ENCODE measurements at regions of chr22 and their contacts with region 1.

Region 1: GRCh38 chr22:42437488-42438292 is 5.5 kb upstream of the NFAM1 start:
- DNase-seq: peak; percentile 71 to 90 (median 81)
- ATAC-seq: peak; percentile 96
- H3K4me3 ChIP-seq: peak overlapping the region; percentile 67
- H3K4me3 Mint-ChIP-seq: peak overlapping the region; percentile 65 to 88 (median 74)
- H3K27ac ChIP-seq: no peak overlapping the region
- H3K27ac Mint-ChIP-seq: peak overlapping the region in 4 of 9 donors; percentile 48 to 87 (median 78)
- H3K4me1 ChIP-seq: peaks cover 0 to 7% of the 10 kb centered on the region in 2 donors
- H3K4me1 Mint-ChIP-seq: peaks cover 0 to 33% (median 12%) of the 10 kb centered on the region in 7 donors
- H3K27me3 ChIP-seq: no peaks in the 10 kb centered on the region
- H3K27me3 Mint-ChIP-seq: peaks cover 0 to 11% (median 0%) of the 10 kb centered on the region in 5 donors

Region 2: GRCh38 chr22:41822317-41823060 is 615.2 kb before region 1 on chr22:
- CTCF ChIA-PET with region 1: no interaction called
- POLR2A ChIA-PET with region 1: no interaction called
- intact Hi-C with region 1: loop called in 1 of 2 experiments (anchors 2 kb)
- DNase-seq: peak in 8 of 9 donors; percentile 30 to 78 (median 70)
- ATAC-seq: peak; percentile 87
- H3K4me3 ChIP-seq: no peak overlapping the region
- H3K4me3 Mint-ChIP-seq: no peak overlapping the region
- H3K27ac ChIP-seq: peak overlapping the region; percentile 4
- H3K27ac Mint-ChIP-seq: peak overlapping the region; percentile 35 to 90 (median 76)
- H3K4me1 ChIP-seq: no peaks in the 10 kb centered on the region
- H3K4me1 Mint-ChIP-seq: peaks cover 5 to 33% (median 15%) of the 10 kb centered on the region in 7 donors
- H3K27me3 ChIP-seq: no peaks in the 10 kb centered on the region
- H3K27me3 Mint-ChIP-seq: no peaks in the 10 kb centered on the region

Region 3: GRCh38 chr22:41966607-41967240 is 471.0 kb before region 1 on chr22:
- CTCF ChIA-PET with region 1: interaction called, 16 read pairs
- POLR2A ChIA-PET with region 1: no interaction called
- intact Hi-C with region 1: loop called (anchors 1 kb)
- DNase-seq: peak in 6 of 9 donors; percentile 20 to 59 (median 48)
- ATAC-seq: peak; percentile 84
- H3K4me3 ChIP-seq: no peak overlapping the region
- H3K4me3 Mint-ChIP-seq: no peak overlapping the region
- H3K27ac ChIP-seq: no peak overlapping the region
- H3K27ac Mint-ChIP-seq: peak overlapping the region in 1 of 9 donors; percentile 72
- H3K4me1 ChIP-seq: no peaks in the 10 kb centered on the region
- H3K4me1 Mint-ChIP-seq: peaks cover 0 to 9% (median 0%) of the 10 kb centered on the region in 7 donors
- H3K27me3 ChIP-seq: no peaks in the 10 kb centered on the region
- H3K27me3 Mint-ChIP-seq: peaks cover 0 to 9% (median 0%) of the 10 kb centered on the region in 5 donors

Region 4: GRCh38 chr22:42269407-42270177 is 168.1 kb before region 1 on chr22:
- CTCF ChIA-PET with region 1: interaction called, 3 read pairs
- POLR2A ChIA-PET with region 1: interaction called, 3 read pairs
- intact Hi-C with region 1: loop called in 1 of 2 experiments (anchors 5 kb)
- DNase-seq: peak; percentile 37 to 74 (median 65)
- ATAC-seq: peak; percentile 64
- H3K4me3 ChIP-seq: peak overlapping the region; percentile 86
- H3K4me3 Mint-ChIP-seq: peak overlapping the region; percentile 86 to 98 (median 92)
- H3K27ac ChIP-seq: peak overlapping the region; percentile 97
- H3K27ac Mint-ChIP-seq: peak overlapping the region; percentile 79 to 95 (median 88)
- H3K4me1 ChIP-seq: peaks cover 28% of the 10 kb centered on the region in 2 donors
- H3K4me1 Mint-ChIP-seq: peaks cover 35 to 56% (median 43%) of the 10 kb centered on the region in 7 donors
- H3K27me3 ChIP-seq: no peaks in the 10 kb centered on the region
- H3K27me3 Mint-ChIP-seq: no peaks in the 10 kb centered on the region

Region 5: DNA sequence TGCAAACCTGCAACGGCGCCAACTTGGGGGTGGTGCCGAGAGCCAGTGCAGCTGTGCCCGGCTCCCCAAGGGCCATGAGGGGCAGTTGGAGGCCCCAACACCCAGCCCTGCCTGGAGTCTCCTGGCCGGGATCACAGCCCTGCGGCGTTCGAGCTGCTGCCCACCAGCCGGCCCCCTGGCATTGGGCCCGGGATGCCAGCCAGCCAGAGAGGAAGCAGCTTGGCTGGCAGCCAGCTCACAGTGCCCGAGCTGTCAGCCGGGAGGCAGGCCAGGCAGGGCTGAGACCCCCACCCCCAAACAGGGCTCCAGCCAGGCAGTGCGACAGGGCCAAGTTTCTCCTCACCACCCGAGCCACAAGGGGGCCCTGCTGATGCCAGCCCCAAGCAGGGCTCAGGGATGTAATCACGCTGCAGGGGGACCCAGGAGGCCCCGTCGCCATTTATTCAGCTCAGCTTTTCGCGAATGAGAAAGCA is 141.3 kb before region 1 on chr22:
- CTCF ChIA-PET with region 1: no interaction called
- POLR2A ChIA-PET with region 1: interaction called, 3 read pairs
- intact Hi-C with region 1: loop called in 1 of 2 experiments (anchors 5 kb)
- DNase-seq: peak in 4 of 9 donors; percentile 37 to 51 (median 44)
- ATAC-seq: no peak
- H3K4me3 ChIP-seq: no peak overlapping the region
- H3K4me3 Mint-ChIP-seq: peak overlapping the region in 5 of 10 donors; percentile 2 to 63 (median 29)
- H3K27ac ChIP-seq: peak overlapping the region; percentile 39
- H3K27ac Mint-ChIP-seq: peak overlapping the region in 8 of 9 donors; percentile 36 to 95 (median 90)
- H3K4me1 ChIP-seq: peaks cover 23 to 69% of the 10 kb centered on the region in 2 donors
- H3K4me1 Mint-ChIP-seq: peaks cover 50 to 94% (median 79%) of the 10 kb centered on the region in 7 donors
- H3K27me3 ChIP-seq: no peaks in the 10 kb centered on the region
- H3K27me3 Mint-ChIP-seq: no peaks in the 10 kb centered on the region

Region 6: DNA sequence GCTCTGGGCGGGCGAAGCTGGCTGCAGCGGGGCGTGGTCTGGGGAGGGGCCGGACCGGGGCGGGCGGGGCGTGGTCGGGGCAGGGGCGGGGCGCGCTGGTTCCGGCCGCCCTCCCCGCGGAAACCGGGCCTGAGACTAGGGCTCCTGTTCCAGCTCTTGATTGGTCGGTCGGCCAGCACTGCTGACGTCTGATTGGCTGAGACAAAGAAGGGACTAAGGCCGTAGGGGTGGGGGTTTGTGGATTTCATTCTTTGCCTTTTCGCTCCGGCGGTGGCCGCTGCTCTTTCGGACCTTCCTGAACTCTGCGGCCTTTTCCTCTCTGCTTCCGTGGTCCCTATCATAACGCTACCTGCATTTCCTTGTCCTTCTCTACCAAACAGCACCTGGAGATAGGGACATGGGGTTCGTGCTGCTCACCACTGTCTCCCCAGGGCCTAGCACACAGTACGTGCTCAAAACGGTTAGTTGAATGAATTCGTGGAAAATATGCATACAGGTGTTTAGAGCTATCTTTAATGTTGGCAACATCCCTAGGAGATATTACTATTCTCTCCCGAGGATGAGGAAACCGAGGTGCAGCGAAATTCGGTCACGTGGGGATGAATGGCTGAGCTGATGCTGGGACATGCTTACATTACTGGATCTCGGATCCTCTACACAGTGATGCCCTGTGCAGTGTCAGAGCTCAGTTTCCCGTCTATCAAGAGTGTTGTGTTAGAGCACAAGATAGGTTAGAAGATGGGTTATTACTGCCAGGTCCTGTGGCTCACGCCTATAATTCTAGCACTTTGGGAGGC is 68.2 kb before region 1 on chr22:
- CTCF ChIA-PET with region 1: interaction called, 3 read pairs
- POLR2A ChIA-PET with region 1: no interaction called
- intact Hi-C with region 1: loop called (anchors 2 to 5 kb)
- DNase-seq: peak; percentile 67 to 84 (median 79)
- ATAC-seq: peak; percentile 99
- H3K4me3 ChIP-seq: peak overlapping the region; percentile 66
- H3K4me3 Mint-ChIP-seq: peak overlapping the region; percentile 87 to 99 (median 93)
- H3K27ac ChIP-seq: peak overlapping the region; percentile 30
- H3K27ac Mint-ChIP-seq: peak overlapping the region; percentile 2 to 88 (median 77)
- H3K4me1 ChIP-seq: peaks cover 4 to 11% of the 10 kb centered on the region in 2 donors
- H3K4me1 Mint-ChIP-seq: peaks cover 9 to 19% (median 14%) of the 10 kb centered on the region in 7 donors
- H3K27me3 ChIP-seq: peaks cover 0 to 18% of the 10 kb centered on the region in 2 donors
- H3K27me3 Mint-ChIP-seq: peaks cover 19 to 49% (median 25%) of the 10 kb centered on the region in 5 donors

Region 7: DNA sequence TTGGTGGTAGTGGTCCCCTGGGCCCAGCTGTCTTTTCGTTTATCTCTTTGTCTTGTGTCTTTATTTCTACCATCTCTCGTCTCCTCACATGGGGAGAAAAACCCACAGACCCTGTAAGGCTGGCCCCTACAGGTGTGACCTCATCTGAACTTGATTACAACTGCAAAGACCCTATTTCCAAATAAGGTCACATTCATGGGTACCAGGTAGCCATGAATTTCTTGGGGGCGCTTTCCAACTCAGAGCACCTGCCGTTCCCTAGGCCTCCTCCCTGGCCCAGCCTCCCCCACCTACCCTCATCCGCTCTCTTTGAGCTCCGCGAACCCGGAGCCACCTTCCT is 95.9 kb after region 1 on chr22:
- CTCF ChIA-PET with region 1: no interaction called
- POLR2A ChIA-PET with region 1: no interaction called
- intact Hi-C with region 1: no loop called
- DNase-seq: no peak
- ATAC-seq: no peak
- H3K4me3 ChIP-seq: peak overlapping the region; percentile 60
- H3K4me3 Mint-ChIP-seq: peak overlapping the region; percentile 72 to 92 (median 83)
- H3K27ac ChIP-seq: peak overlapping the region; percentile 39
- H3K27ac Mint-ChIP-seq: peak overlapping the region in 8 of 9 donors; percentile 55 to 95 (median 77)
- H3K4me1 ChIP-seq: peaks cover 0 to 5% of the 10 kb centered on the region in 2 donors
- H3K4me1 Mint-ChIP-seq: peaks cover 7 to 26% (median 9%) of the 10 kb centered on the region in 7 donors
- H3K27me3 ChIP-seq: no peaks in the 10 kb centered on the region
- H3K27me3 Mint-ChIP-seq: peaks cover 0 to 4% (median 0%) of the 10 kb centered on the region in 5 donors